CD8-positive, alpha-beta T cell (primary cell): ENCODE measurements at regions of chr2 and their contacts with region 1.

Region 1: DNA sequence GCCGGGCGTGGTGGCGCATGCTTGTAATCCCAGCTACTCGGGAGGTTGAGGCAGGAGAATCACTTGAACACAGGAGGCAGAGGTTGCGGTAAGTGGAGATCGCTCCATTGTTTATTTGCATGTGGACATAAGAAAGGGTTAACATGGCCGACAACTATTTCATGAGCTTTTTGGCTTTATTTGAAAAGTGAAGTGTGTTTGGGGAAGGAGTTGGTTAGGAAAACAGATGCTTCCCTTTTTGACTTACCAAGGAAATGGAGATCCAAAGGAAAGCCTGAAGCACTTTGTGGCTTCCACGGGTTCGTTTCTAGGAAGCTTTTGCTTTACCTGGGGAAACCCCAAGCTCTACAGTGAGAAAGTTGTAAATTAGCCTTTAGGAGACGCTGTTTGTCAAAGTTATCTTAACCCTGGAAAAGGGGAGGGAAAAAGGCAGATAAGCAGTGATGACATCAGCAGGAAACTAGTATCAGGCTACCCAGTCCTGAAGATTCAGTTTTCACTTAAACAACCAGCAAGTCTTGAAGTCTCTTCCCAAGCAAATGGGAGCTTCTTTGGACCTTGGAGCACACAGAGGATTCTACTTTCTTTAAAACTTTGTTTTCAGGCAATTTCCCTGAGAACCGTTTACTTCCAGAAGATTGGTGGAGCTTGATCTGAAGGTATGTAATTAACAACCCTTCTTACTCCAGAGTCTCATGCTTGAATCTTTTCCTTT is at the start of gene CASP10:
- DNase-seq: peak in 5 of 9 experiments; percentile 17 to 89 (median 23)
- ATAC-seq: peak; percentile 87
- H3K4me3 ChIP-seq: peak within 1 kb of the TSS; percentile 57 to 60
- H3K4me3 Mint-ChIP-seq: peak within 1 kb of the TSS; percentile 94
- H3K27ac ChIP-seq: peak within 1 kb of the TSS; percentile 58 to 78
- H3K27ac Mint-ChIP-seq: peak within 1 kb of the TSS; percentile 95
- H3K4me1 ChIP-seq: peaks cover 25% of the 10 kb centered on the region
- H3K4me1 Mint-ChIP-seq: peaks cover 45% of the 10 kb centered on the region
- H3K27me3 ChIP-seq: no peaks in the 10 kb centered on the region
- H3K27me3 Mint-ChIP-seq: no peaks in the 10 kb centered on the region
- CTCF ChIP-seq: peak; percentile 48
- total RNA-seq, gene CASP10: 9.8 to 10.4 TPM

Region 2: DNA sequence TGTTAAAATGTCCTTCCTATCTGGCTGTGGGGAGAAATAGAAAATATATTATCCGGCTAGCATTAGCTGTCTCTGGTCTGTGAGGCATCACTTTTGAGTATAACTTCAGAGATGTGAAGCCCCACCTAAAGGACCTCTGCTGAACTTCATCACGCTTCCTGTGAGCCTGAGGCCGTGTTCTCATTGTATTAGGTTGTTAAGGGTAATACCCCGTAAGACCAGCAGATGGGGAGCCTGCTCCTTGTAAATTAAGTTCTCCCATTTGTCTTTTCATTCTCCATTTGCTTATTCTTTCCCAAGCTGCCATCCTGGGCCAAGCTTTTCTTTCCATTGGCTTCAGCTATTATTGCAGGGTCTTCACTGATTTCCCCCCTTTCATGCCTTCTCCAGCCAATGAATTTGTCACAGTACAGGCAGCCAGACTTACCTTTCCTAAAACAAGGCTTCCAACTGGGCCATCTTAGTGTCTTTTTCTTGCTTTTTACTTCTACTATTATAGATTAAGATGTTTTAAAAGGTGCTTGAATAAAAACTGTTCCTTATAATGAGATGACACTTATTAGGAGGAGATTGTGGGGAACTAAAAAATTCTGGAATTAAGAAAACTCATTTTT is 281.2 kb before region 1 on chr2:
- CTCF ChIA-PET with region 1: interaction called, 18 read pairs
- POLR2A ChIA-PET with region 1: interaction called, 5 read pairs
- intact Hi-C with region 1: no loop called
- DNase-seq: peak; percentile 36 to 92 (median 73)
- ATAC-seq: peak; percentile 100
- H3K4me3 ChIP-seq: no peak overlapping the region
- H3K4me3 Mint-ChIP-seq: no peak overlapping the region
- H3K27ac ChIP-seq: peak overlapping the region in 1 of 2 experiments; percentile 4
- H3K27ac Mint-ChIP-seq: peak overlapping the region; percentile 45
- H3K4me1 ChIP-seq: peaks cover 4% of the 10 kb centered on the region
- H3K4me1 Mint-ChIP-seq: peaks cover 7% of the 10 kb centered on the region
- H3K27me3 ChIP-seq: no peaks in the 10 kb centered on the region
- H3K27me3 Mint-ChIP-seq: no peaks in the 10 kb centered on the region
- CTCF ChIP-seq: peak; percentile 84

Region 3: DNA sequence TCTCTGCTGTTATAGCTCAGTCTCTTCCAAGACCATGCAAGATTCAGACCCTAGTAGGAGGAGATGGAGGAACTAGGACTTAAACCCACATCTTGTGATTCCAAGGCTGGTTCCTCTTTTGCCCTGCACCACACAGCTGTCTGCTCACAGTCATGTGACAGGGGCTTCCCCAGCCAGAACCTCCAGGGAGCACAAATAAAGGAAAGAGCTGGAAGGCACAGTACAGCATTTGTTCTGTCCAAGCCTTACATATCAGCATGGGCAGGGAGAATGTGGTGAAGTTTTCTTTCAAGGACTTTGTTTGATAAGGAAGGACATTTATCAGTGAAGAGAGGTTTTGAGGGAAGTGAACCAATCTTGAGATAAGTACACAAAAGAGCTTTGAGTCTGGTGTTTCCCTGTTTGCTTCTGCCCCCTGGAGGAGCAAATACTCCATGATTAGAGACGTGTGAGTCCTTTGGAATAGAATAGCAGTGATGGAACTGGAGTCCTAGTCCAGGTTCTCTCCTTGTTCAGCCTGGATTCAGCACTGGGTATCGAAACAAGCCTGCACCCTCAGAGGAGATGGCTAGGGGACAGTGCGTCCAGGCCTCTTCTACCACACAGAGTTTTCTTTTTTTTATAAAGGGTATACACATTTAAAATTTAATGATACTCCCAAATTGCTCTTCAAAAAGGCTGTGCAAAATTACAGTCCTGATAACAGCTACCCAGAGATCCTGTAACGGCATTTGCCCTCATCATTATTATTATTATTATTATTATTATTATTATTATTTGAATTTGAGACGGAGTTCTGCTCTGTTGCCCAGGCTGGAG is 24.5 kb before region 1 on chr2:
- CTCF ChIA-PET with region 1: interaction called, 10 read pairs
- POLR2A ChIA-PET with region 1: no interaction called
- intact Hi-C with region 1: no loop called
- DNase-seq: peak; percentile 21 to 83 (median 65)
- ATAC-seq: peak; percentile 93
- H3K4me3 ChIP-seq: no peak overlapping the region
- H3K4me3 Mint-ChIP-seq: no peak overlapping the region
- H3K27ac ChIP-seq: peak overlapping the region in 1 of 2 experiments; percentile 68
- H3K27ac Mint-ChIP-seq: peak overlapping the region; percentile 83
- H3K4me1 ChIP-seq: peaks cover 11% of the 10 kb centered on the region
- H3K4me1 Mint-ChIP-seq: peaks cover 18% of the 10 kb centered on the region
- H3K27me3 ChIP-seq: no peaks in the 10 kb centered on the region
- H3K27me3 Mint-ChIP-seq: no peaks in the 10 kb centered on the region
- CTCF ChIP-seq: peak; percentile 54

Region 4: GRCh38 chr2:201201371-201201770 is 18.6 kb after region 1 on chr2:
- CTCF ChIA-PET with region 1: interaction called, 42 read pairs
- POLR2A ChIA-PET with region 1: no interaction called
- intact Hi-C with region 1: no loop called
- DNase-seq: peak in 3 of 9 experiments; percentile 28 to 53 (median 37)
- ATAC-seq: no peak
- H3K4me3 ChIP-seq: no peak overlapping the region
- H3K4me3 Mint-ChIP-seq: no peak overlapping the region
- H3K27ac ChIP-seq: peak overlapping the region in 1 of 2 experiments; percentile 36
- H3K27ac Mint-ChIP-seq: peak overlapping the region; percentile 86
- H3K4me1 ChIP-seq: peaks cover 10% of the 10 kb centered on the region
- H3K4me1 Mint-ChIP-seq: peaks cover 45% of the 10 kb centered on the region
- H3K27me3 ChIP-seq: no peaks in the 10 kb centered on the region
- H3K27me3 Mint-ChIP-seq: no peaks in the 10 kb centered on the region
- CTCF ChIP-seq: no peak

Region 5: GRCh38 chr2:201257956-201258665 is 75.3 kb after region 1 on chr2:
- CTCF ChIA-PET with region 1: interaction called, 11 read pairs
- POLR2A ChIA-PET with region 1: interaction called, 4 read pairs
- intact Hi-C with region 1: loop called in 1 of 2 experiments (anchors 2 kb)
- DNase-seq: peak; percentile 87 to 99 (median 94)
- ATAC-seq: peak; percentile 69
- H3K4me3 ChIP-seq: peak overlapping the region; percentile 45 to 48
- H3K4me3 Mint-ChIP-seq: peak overlapping the region; percentile 89
- H3K27ac ChIP-seq: peak overlapping the region; percentile 85 to 93
- H3K27ac Mint-ChIP-seq: peak overlapping the region; percentile 97
- H3K4me1 ChIP-seq: peaks cover 68% of the 10 kb centered on the region
- H3K4me1 Mint-ChIP-seq: peaks cover 75% of the 10 kb centered on the region
- H3K27me3 ChIP-seq: no peaks in the 10 kb centered on the region
- H3K27me3 Mint-ChIP-seq: no peaks in the 10 kb centered on the region
- CTCF ChIP-seq: no peak

Region 6: GRCh38 chr2:201628545-201628944 is 445.7 kb after region 1 on chr2:
- CTCF ChIA-PET with region 1: no interaction called
- POLR2A ChIA-PET with region 1: no interaction called
- intact Hi-C with region 1: no loop called
- DNase-seq: no peak
- ATAC-seq: no peak
- H3K4me3 ChIP-seq: no peak overlapping the region
- H3K4me3 Mint-ChIP-seq: no peak overlapping the region
- H3K27ac ChIP-seq: no peak overlapping the region
- H3K27ac Mint-ChIP-seq: no peak overlapping the region
- H3K4me1 ChIP-seq: no peaks in the 10 kb centered on the region
- H3K4me1 Mint-ChIP-seq: no peaks in the 10 kb centered on the region
- H3K27me3 ChIP-seq: no peaks in the 10 kb centered on the region
- H3K27me3 Mint-ChIP-seq: no peaks in the 10 kb centered on the region
- CTCF ChIP-seq: no peak

Region 7: DNA sequence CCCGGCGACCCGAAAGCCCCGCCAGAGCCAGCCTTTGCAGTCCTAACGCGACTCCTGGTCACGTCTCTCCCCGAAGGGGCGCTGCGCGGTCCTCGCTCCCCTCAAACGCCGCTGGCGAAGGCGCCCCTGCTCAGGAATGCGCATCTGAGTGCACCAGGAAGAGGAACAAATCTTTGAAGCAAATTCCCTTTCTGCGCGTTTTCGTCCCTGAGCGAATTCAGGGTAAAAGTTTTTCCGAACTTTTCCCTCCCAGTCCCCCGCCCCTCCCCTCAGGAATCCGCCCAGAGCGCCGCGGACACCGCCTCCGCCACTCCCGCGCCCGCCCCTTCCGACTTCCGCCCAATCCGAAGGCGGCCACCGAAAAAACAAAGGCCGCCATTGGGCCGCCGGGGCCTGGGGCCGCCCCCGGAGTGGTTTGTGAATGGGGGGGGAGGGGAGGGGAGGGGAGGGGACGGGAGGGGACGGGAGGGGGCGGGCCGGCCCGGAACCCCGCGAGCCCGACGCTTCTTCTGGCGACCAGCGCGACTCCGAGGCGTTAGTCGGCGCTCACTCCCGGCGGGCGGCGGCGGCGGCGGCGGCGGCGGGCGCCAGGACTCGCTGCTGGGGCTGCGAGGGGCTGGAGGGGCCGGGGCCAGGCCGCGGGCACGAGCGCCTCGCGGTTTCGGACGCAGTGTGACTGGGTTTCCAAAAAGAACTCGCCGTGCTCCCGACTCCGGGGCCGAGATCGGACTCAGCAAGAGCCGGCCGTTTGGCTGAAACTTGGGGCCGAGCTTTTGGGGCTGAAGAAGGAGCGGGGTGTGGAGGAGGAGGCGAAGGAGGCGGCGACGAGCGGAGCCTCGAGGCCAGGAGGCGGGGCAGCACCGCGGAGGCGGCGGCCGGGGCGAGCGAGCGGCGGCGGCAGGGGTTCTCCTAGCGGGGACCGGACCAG is 850.8 kb after region 1 on chr2 and contains the start of gene FZD7:
- CTCF ChIA-PET with region 1: no interaction called
- POLR2A ChIA-PET with region 1: no interaction called
- intact Hi-C with region 1: loop called in 1 of 2 experiments (anchors 2 kb)
- DNase-seq: peak; percentile 66 to 91 (median 83)
- ATAC-seq: peak; percentile 78
- H3K4me3 ChIP-seq: peak within 1 kb of the TSS; percentile 77 to 84
- H3K4me3 Mint-ChIP-seq: peak within 1 kb of the TSS; percentile 88
- H3K27ac ChIP-seq: peak within 1 kb of the TSS in 1 of 2 experiments; percentile 14
- H3K27ac Mint-ChIP-seq: no peak within 1 kb of the TSS
- H3K4me1 ChIP-seq: peaks cover 25% of the 10 kb centered on the region
- H3K4me1 Mint-ChIP-seq: peaks cover 13% of the 10 kb centered on the region
- H3K27me3 ChIP-seq: peaks cover 26 to 29% of the 10 kb centered on the region in 2 experiments
- H3K27me3 Mint-ChIP-seq: peaks cover 12% of the 10 kb centered on the region
- CTCF ChIP-seq: no peak
- total RNA-seq, gene FZD7: 0.73 to 0.97 TPM

Region 8: GRCh38 chr2:202436626-202437025 is 1253.8 kb after region 1 on chr2:
- CTCF ChIA-PET with region 1: no interaction called
- POLR2A ChIA-PET with region 1: no interaction called
- intact Hi-C with region 1: no loop called
- DNase-seq: no peak
- ATAC-seq: no peak
- H3K4me3 ChIP-seq: no peak overlapping the region
- H3K4me3 Mint-ChIP-seq: no peak overlapping the region
- H3K27ac ChIP-seq: no peak overlapping the region
- H3K27ac Mint-ChIP-seq: no peak overlapping the region
- H3K4me1 ChIP-seq: no peaks in the 10 kb centered on the region
- H3K4me1 Mint-ChIP-seq: no peaks in the 10 kb centered on the region
- H3K27me3 ChIP-seq: no peaks in the 10 kb centered on the region
- H3K27me3 Mint-ChIP-seq: no peaks in the 10 kb centered on the region
- CTCF ChIP-seq: no peak